Activated CD4-positive, alpha-beta memory T cell treated with anti-CD3 and anti-CD28 coated beads, Interleukin-2, amount 10 ng/mL, durations not matched to agents 7 days and 5 days (primary cell): ENCODE measurements at regions of chr9 and their contacts with region 1.

Region 1: DNA sequence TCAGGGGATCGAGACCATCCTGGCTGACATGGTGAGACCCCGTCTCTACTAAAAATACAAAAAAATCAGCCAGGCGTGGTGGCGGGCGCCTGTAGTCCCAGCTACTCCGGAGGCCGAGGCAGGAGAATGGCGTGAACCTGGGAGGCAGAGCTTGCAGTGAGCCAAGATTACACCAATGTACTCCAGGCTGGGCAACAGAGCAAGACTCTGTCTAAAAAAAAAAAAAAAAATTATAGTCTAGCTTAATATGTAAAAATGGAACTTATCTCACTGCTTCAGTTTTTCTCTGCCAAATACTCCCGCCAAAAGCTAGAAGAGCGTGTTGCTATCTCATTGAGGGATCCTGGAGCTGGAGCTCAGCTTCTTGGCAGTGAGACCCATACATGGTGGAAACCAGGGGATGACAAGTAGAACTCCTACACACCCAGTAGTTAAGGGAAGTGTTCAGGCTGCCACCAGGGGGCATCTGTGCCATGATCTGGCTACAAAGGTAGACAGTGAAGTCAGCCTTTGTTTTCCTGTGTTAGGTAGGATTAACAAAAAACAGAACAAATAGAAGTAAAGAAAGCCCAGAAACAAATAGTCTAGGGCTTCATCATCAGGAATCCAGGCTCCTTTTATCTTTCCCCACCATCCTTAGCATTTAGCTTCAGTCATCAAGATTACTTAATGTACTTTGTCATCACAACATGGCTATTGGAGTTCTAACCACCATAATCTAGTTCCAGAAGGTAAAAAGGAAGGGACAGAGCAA is 33.6 kb upstream of the GLIPR2 start:
- DNase-seq: peak; percentile 88
- H3K4me3 Mint-ChIP-seq: no peak overlapping the region
- H3K27ac Mint-ChIP-seq: no peak overlapping the region
- H3K4me1 Mint-ChIP-seq: peaks cover 8% of the 10 kb centered on the region
- H3K27me3 Mint-ChIP-seq: no peaks in the 10 kb centered on the region

Region 2: GRCh38 chr9:35756275-35757225 is 346.4 kb before region 1 on chr9:
- CTCF ChIA-PET with region 1: no interaction called
- POLR2A ChIA-PET with region 1: no interaction called
- DNase-seq: peak; percentile 84
- H3K4me3 Mint-ChIP-seq: peak overlapping the region; percentile 90
- H3K27ac Mint-ChIP-seq: peak overlapping the region; percentile 90
- H3K4me1 Mint-ChIP-seq: peaks cover 42% of the 10 kb centered on the region
- H3K27me3 Mint-ChIP-seq: no peaks in the 10 kb centered on the region

Region 3: GRCh38 chr9:36092509-36093215 is 10.3 kb before region 1 on chr9:
- CTCF ChIA-PET with region 1: interaction called, 19 read pairs
- POLR2A ChIA-PET with region 1: interaction called, 3 read pairs
- DNase-seq: peak; percentile 64
- H3K4me3 Mint-ChIP-seq: no peak overlapping the region
- H3K27ac Mint-ChIP-seq: peak overlapping the region; percentile 81
- H3K4me1 Mint-ChIP-seq: peaks cover 19% of the 10 kb centered on the region
- H3K27me3 Mint-ChIP-seq: no peaks in the 10 kb centered on the region

Region 4: GRCh38 chr9:36136272-36136893 is 33.5 kb after region 1 on chr9 and contains the start of gene GLIPR2:
- CTCF ChIA-PET with region 1: interaction called, 13 read pairs
- POLR2A ChIA-PET with region 1: interaction called, 3 read pairs
- DNase-seq: peak; percentile 86
- H3K4me3 Mint-ChIP-seq: peak within 1 kb of the TSS; percentile 93
- H3K27ac Mint-ChIP-seq: peak within 1 kb of the TSS; percentile 70
- H3K4me1 Mint-ChIP-seq: peaks cover 52% of the 10 kb centered on the region
- H3K27me3 Mint-ChIP-seq: peaks cover 16% of the 10 kb centered on the region
- total RNA-seq, gene GLIPR2: 45.3 to 48.0 TPM

Region 5: GRCh38 chr9:36148311-36149051 is 45.6 kb after region 1 on chr9:
- CTCF ChIA-PET with region 1: interaction called, 20 read pairs
- POLR2A ChIA-PET with region 1: interaction called, 14 read pairs
- DNase-seq: peak; percentile 84
- H3K4me3 Mint-ChIP-seq: no peak overlapping the region
- H3K27ac Mint-ChIP-seq: peak overlapping the region; percentile 71
- H3K4me1 Mint-ChIP-seq: peaks cover 93% of the 10 kb centered on the region
- H3K27me3 Mint-ChIP-seq: peaks cover 3% of the 10 kb centered on the region

Region 6: DNA sequence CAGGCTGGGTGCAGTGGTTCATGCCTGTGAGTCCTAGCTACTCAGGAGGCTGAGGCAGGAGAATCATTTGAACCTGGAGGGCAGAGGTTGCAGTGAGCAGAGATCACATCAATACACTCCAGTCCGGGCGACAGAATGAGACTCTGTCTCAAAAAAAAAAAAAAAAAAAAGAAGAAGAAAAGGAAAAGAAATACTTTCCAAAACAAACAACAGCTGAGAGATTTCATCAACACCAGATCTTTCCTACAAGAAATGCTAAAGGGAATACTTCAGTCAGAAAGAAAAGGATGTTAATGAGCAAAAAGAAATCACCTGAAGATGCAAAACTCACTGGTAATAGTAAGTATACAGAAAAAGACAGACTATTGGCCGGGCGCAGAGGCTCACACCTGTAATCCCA is 74.7 kb after region 1 on chr9:
- CTCF ChIA-PET with region 1: interaction called, 325 read pairs
- POLR2A ChIA-PET with region 1: interaction called, 3 read pairs
- DNase-seq: no peak
- H3K4me3 Mint-ChIP-seq: no peak overlapping the region
- H3K27ac Mint-ChIP-seq: no peak overlapping the region
- H3K4me1 Mint-ChIP-seq: peaks cover 9% of the 10 kb centered on the region
- H3K27me3 Mint-ChIP-seq: peaks cover 19% of the 10 kb centered on the region